ENCODE measurements at regions of chr20 and their contacts with region 1.

Region 1: GRCh38 chr20:20664795-20665589 is 47.5 kb downstream of the RALGAPA2 start:
- DNase-seq: no peak
- H3K4me3 ChIP-seq: no peak overlapping the region
- CTCF ChIP-seq: no peak
- POLR2A ChIP-seq: no peak

Region 2: GRCh38 chr20:20824924-20825584 is 160.1 kb after region 1 on chr20:
- intact Hi-C with region 1: loop called (anchors 10 kb)
- DNase-seq: peak in 1 of 2 donors; percentile 88
- H3K4me3 ChIP-seq: no peak overlapping the region
- CTCF ChIP-seq: peak in 1 of 3 donors; percentile 47
- POLR2A ChIP-seq: no peak

Measured in lower leg skin (tissue), 4 donors.